ENCODE measurements at regions of chrX and their contacts with region 1.

Region 1: DNA sequence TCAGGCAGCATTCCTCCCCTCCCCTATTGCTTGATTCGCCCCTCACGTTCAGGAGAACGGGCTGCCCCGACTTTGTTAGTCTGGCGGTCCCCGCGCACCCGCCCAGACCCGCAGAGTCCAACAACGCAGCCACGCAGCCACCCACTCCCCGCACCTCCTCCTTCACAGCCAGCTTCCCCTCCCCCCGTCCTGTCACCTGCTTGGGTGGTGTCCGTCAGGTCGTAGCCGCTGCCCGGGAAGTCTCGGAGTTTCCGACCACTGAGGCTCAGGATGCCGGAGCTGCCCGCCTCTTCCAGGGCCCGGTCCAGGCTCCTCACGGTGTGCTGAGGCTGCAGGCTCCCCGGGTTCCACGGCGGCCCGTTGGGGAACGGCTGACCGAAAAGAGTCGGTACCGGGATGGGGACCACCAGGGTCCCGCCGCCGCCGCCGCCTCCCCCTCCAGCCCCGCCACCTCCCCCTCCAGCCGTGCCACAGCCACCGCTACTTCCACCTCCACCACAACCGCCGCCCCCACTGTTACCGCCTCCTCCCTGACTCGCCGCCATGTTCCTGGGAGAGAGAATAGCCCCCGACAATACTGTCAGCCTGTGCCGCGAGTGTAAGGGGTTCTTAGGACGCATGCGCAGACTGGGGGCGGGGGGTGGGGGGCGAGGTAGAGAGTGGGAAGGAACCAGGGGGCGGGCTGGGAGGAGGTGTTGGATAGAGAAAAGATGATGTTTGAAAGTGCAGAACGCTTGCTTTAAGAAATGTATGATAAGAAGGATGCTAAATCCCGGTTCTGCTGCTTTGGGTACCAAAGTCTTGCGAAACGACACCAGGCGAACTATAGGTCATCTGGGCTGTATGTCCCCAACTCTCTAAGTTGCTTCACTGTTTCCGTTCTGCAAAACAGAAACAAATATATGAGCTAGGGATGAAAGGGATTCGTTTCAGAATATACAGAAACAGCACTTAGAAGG is at the start of gene LRCH2:
- DNase-seq: peak; percentile 47
- H3K4me3 ChIP-seq: peak within 1 kb of the TSS; percentile 68 to 89 (median 88)
- H3K27ac ChIP-seq: no peak within 1 kb of the TSS
- H3K4me1 ChIP-seq: peaks cover 13% of the 10 kb centered on the region
- H3K27me3 ChIP-seq: no peaks in the 10 kb centered on the region
- CTCF ChIP-seq: no peak
- POLR2A ChIP-seq: no peak
- total RNA-seq, gene LRCH2: 4.6 and 4.7 TPM in 2 replicates

Region 2: GRCh38 chrX:115174548-115174947 is 59.2 kb before region 1 on chrX:
- CTCF ChIA-PET with region 1: no interaction called
- POLR2A ChIA-PET with region 1: no interaction called
- dilution Hi-C with region 1: no loop called
- intact Hi-C with region 1: loop called (anchors 5 kb)
- DNase-seq: peak; percentile 62
- H3K4me3 ChIP-seq: no peak overlapping the region
- H3K27ac ChIP-seq: peak overlapping the region; percentile 53
- H3K4me1 ChIP-seq: peaks cover 9% of the 10 kb centered on the region
- H3K27me3 ChIP-seq: no peaks in the 10 kb centered on the region
- CTCF ChIP-seq: no peak
- POLR2A ChIP-seq: no peak

Region 3: DNA sequence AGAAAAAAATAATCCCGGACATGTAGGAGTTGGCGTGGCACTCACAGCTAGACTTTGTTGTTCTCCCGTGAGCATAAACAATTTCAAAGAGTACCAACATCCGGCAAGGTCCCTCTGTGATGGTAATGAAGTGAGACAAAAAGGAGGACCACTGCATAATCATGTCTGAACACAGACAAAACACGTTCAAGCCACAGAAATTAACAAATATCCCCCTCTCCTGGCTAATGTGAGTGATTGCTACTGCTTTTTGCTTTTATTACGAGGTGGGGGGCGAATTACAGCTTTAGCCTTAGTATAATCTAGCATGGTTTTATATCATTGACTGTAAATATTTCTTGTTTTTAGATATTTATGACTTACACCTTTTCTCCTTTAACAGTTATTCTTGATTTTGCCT is 445.7 kb after region 1 on chrX:
- CTCF ChIA-PET with region 1: no interaction called
- POLR2A ChIA-PET with region 1: no interaction called
- dilution Hi-C with region 1: no loop called
- intact Hi-C with region 1: loop called (anchors 5 kb)
- DNase-seq: peak; percentile 38
- H3K4me3 ChIP-seq: no peak overlapping the region
- H3K27ac ChIP-seq: no peak overlapping the region
- H3K4me1 ChIP-seq: no peaks in the 10 kb centered on the region
- H3K27me3 ChIP-seq: no peaks in the 10 kb centered on the region
- CTCF ChIP-seq: peak; percentile 24
- POLR2A ChIP-seq: no peak